Ascending aorta (tissue), 2 donors: ENCODE measurements at regions of chr7 and their contacts with region 1.

Region 1: GRCh38 chr7:135620980-135621850 is 41.1 kb upstream of the STMP1 start:
- DNase-seq: peak in 1 of 2 donors; percentile 74
- H3K4me3 ChIP-seq: no peak overlapping the region
- H3K27ac ChIP-seq: no peak overlapping the region
- H3K4me1 ChIP-seq: peaks cover 0 to 4% of the 10 kb centered on the region in 2 donors
- H3K27me3 ChIP-seq: no peaks in the 10 kb centered on the region
- CTCF ChIP-seq: peak; percentile 45 to 81 (median 78)

Region 2: DNA sequence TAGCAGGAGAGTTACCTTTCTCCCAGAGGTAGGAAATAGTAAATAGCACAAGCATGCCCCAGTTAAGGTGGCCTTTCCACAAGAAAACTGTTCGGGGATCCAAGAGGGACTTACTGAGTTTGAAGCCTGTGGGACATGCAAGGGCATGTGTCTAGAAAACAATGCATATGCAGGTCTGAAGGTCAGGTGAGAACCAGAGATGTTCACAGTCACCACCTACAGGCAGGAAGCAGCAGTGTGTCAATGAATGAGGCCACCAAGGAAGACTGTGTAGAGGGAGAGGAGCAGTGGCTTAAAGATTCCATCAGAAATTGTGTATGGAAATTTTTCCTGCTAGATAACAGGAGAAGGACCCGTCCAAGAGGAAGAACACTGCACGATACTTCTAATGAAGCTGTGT is 775.7 kb before region 1 on chr7:
- intact Hi-C with region 1: no loop called
- DNase-seq: no peak
- H3K4me3 ChIP-seq: no peak overlapping the region
- H3K27ac ChIP-seq: peak overlapping the region; percentile 58 to 77
- H3K4me1 ChIP-seq: peaks cover 17 to 70% of the 10 kb centered on the region in 2 donors
- H3K27me3 ChIP-seq: no peaks in the 10 kb centered on the region
- CTCF ChIP-seq: no peak

Region 3: DNA sequence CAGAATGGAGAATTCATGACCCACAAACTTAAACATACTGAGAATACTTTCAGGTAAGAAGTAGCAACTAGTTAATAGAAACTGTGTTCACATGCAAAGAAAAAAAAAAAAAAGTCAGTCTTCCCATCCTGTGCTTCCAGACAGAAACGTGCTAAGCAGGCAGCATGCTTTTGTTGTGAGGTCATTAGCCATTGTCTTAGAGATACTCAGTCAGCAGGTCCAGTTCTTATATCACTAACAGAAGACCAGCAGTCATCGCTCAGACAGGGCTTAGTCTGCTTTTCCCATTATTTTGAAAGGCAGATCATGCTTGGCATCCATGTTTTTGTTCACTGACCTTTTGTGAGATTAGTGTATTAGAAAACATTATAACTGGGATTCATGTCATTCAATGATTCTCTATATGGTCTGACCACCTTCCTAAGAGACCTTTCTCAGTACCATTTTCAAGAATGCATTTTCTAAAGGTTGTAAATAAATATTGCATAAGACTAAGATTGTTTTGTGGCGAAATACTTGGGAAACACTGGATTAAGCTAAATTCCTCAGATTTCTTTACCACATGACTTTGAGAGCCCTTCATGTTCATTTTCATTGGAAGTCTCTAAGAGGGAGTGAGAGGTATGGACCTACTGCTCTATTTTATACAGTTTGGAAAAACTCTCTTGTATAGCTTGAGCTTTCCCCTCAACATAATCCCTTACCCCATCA is 679.9 kb before region 1 on chr7:
- intact Hi-C with region 1: no loop called
- DNase-seq: no peak
- H3K4me3 ChIP-seq: no peak overlapping the region
- H3K27ac ChIP-seq: peak overlapping the region; percentile 59 to 69
- H3K4me1 ChIP-seq: peaks cover 12 to 26% of the 10 kb centered on the region in 2 donors
- H3K27me3 ChIP-seq: no peaks in the 10 kb centered on the region
- CTCF ChIP-seq: no peak

Region 4: GRCh38 chr7:135558337-135558767 is 62.9 kb before region 1 on chr7:
- intact Hi-C with region 1: no loop called
- DNase-seq: peak in 1 of 2 donors; percentile 76
- H3K4me3 ChIP-seq: peak overlapping the region; percentile 65 to 91
- H3K27ac ChIP-seq: peak overlapping the region; percentile 90 to 91
- H3K4me1 ChIP-seq: peaks cover 0 to 7% of the 10 kb centered on the region in 2 donors
- H3K27me3 ChIP-seq: no peaks in the 10 kb centered on the region
- CTCF ChIP-seq: peak; percentile 36 to 57 (median 45)

Region 5: GRCh38 chr7:135645296-135645904 is 24.2 kb after region 1 on chr7:
- intact Hi-C with region 1: loop called (anchors 2 kb)
- DNase-seq: no peak
- H3K4me3 ChIP-seq: peak overlapping the region in 1 of 2 donors; percentile 20
- H3K27ac ChIP-seq: no peak overlapping the region
- H3K4me1 ChIP-seq: no peaks in the 10 kb centered on the region
- H3K27me3 ChIP-seq: no peaks in the 10 kb centered on the region
- CTCF ChIP-seq: peak; percentile 23 to 81 (median 79)

Region 6: GRCh38 chr7:136062625-136063325 is 441.6 kb after region 1 on chr7:
- intact Hi-C with region 1: no loop called
- DNase-seq: no peak
- H3K4me3 ChIP-seq: no peak overlapping the region
- H3K27ac ChIP-seq: no peak overlapping the region
- H3K4me1 ChIP-seq: no peaks in the 10 kb centered on the region
- H3K27me3 ChIP-seq: no peaks in the 10 kb centered on the region
- CTCF ChIP-seq: no peak